Gastrocnemius medialis (tissue), 4 donors: ENCODE measurements at regions of chr7 and their contacts with region 1.

Region 1: GRCh38 chr7:71439321-71439720 is 307.4 kb downstream of the GALNT17 start:
- DNase-seq: no peak
- ATAC-seq: no peak
- H3K4me3 ChIP-seq: no peak overlapping the region
- H3K27ac ChIP-seq: no peak overlapping the region
- H3K4me1 ChIP-seq: no peaks in the 10 kb centered on the region
- H3K27me3 ChIP-seq: no peaks in the 10 kb centered on the region
- CTCF ChIP-seq: no peak
- POLR2A ChIP-seq: no peak

Region 2: GRCh38 chr7:71389976-71390375 is 49.3 kb before region 1 on chr7:
- in situ Hi-C with region 1: no loop called
- intact Hi-C with region 1: loop called (anchors 1 kb)
- DNase-seq: no peak
- ATAC-seq: no peak
- H3K4me3 ChIP-seq: no peak overlapping the region
- H3K27ac ChIP-seq: no peak overlapping the region
- H3K4me1 ChIP-seq: no peaks in the 10 kb centered on the region
- H3K27me3 ChIP-seq: no peaks in the 10 kb centered on the region
- CTCF ChIP-seq: no peak
- POLR2A ChIP-seq: no peak

Region 3: GRCh38 chr7:71411475-71411874 is 27.8 kb before region 1 on chr7:
- in situ Hi-C with region 1: no loop called
- intact Hi-C with region 1: loop called (anchors 2 kb)
- DNase-seq: no peak
- ATAC-seq: no peak
- H3K4me3 ChIP-seq: no peak overlapping the region
- H3K27ac ChIP-seq: no peak overlapping the region
- H3K4me1 ChIP-seq: no peaks in the 10 kb centered on the region
- H3K27me3 ChIP-seq: no peaks in the 10 kb centered on the region
- CTCF ChIP-seq: no peak
- POLR2A ChIP-seq: no peak